Activated T-helper 1 cell treated with anti-CD3 and anti-CD28 coated beads, Interleukin-12 subunit alpha, Interleukin-12 subunit beta, Interleukin-2, Interleukin-4 antibody, amounts not matched to agents 30 ng/mL and 10 ng/mL and 1 ng/mL, durations not matched to agents 14 hours and 24 hours and 36 hours (primary cell): ENCODE measurements at regions of chr1 and their contacts with region 1.

Region 1: DNA sequence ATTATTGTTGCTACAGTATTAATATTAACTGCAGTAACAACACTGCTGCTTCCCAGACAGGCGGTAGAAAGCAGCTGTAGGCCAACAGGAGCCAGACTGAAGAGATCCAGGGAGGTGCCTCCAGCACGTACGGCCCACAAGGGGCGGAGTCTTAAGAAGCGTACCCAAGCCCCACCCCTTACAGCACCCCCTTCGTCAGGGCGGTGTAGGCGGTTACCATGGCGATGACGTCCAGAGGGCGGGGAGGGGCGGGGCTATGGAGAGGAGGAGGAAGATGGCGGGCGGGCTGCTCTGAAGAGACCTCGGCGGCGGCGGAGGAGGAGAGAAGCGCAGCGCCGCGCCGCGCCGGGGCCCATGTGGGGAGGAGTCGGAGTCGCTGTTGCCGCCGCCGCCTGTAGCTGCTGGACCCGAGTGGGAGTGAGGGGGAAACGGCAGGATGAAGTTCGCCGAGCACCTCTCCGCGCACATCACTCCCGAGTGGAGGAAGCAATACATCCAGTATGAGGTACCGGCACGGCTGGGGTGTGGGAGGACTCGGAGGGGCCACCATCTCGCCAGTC is at the start of gene XPR1:
- DNase-seq: peak; percentile 91
- H3K4me3 Mint-ChIP-seq: peak within 1 kb of the TSS; percentile 87
- H3K27ac Mint-ChIP-seq: peak within 1 kb of the TSS; percentile 87
- H3K4me1 Mint-ChIP-seq: peaks cover 8% of the 10 kb centered on the region
- H3K27me3 Mint-ChIP-seq: peaks cover 5% of the 10 kb centered on the region
- total RNA-seq, gene XPR1: 21.1 and 21.2 TPM in 2 replicates

Region 2: DNA sequence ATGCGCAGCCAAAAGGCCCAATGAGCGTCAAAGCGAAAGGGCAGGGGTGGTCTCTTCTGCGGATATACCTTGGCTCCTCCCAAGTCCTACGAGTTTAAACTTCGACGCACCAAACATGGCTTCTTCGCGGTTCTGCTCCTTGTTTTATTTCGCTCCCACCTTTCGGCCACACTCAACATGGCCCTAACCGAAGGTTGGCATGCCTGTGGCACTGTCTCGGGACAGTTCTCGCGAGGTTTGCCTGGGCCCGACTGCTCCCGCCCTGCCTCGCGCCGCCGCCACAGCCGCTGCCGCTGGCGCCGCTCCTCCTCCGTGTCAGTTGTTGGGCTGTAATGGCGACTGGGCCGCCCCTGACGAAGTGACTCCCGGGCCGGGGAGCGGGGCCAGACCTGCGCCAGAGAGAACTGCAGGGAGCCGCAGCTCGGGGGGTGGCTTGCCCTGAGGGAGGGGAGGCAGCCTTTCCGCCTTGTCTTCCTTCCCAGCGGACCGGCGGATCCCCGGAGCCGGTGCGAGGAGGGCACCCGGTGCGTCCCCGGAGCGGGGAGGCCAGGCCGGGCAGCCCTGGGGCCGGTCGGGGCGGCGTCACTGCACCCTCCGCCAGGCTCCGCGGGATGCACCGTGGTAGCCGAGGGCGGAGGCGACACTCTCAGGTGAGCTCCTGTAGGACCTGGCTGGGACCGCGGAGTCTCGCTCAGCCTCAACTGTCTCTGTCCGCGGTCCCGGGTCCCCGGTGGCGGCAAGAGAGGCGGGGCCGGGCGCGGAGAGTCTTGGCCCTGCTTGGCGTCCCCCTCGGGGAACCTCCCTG is 677.2 kb before region 1 on chr1 and contains the start of gene CEP350:
- intact Hi-C with region 1: loop called (anchors 1 kb)
- DNase-seq: peak; percentile 96
- H3K4me3 Mint-ChIP-seq: peak within 1 kb of the TSS; percentile 94
- H3K27ac Mint-ChIP-seq: peak within 1 kb of the TSS; percentile 94
- H3K4me1 Mint-ChIP-seq: peaks cover 50% of the 10 kb centered on the region
- H3K27me3 Mint-ChIP-seq: no peaks in the 10 kb centered on the region
- total RNA-seq, gene CEP350: 44.6 and 51.6 TPM in 2 replicates

Region 3: DNA sequence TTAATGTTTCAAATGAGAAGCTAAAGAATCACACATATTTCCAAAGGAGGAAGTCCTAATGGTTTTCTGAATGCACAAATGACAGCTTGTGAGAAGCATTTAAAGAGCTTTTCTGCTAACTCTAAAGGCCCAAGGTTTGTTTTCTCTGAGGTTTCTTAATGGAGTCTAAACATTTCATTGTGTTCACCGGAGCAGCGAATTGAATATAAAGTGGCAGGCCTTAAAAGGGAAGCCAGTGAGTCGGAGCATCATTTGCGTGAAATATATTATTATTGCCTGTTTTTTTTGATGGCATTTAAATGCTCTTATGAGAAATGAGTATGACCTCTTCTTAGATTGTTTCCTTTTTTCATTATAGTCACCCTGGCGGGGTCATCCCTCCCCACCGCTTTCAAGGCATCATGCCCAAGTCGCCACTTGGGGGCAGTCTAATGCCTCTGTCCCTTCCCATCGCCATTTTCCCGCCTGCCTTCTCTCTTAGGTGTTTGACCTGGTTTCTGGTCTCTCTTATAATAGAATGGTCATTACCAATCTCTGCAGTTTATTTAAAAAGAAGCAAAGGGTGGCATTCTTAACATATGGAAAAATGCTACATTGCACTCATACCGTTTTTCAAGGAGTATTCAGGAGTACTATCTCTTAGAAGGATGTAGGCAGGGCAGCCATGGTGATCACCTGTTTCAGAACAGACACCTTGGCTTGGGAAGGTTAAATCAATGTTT is 98.4 kb before region 1 on chr1:
- intact Hi-C with region 1: loop called (anchors 2 kb)
- DNase-seq: peak; percentile 42
- H3K4me3 Mint-ChIP-seq: no peak overlapping the region
- H3K27ac Mint-ChIP-seq: no peak overlapping the region
- H3K4me1 Mint-ChIP-seq: no peaks in the 10 kb centered on the region
- H3K27me3 Mint-ChIP-seq: peaks cover 6% of the 10 kb centered on the region

Region 4: GRCh38 chr1:180863158-180863775 is 231.4 kb after region 1 on chr1:
- intact Hi-C with region 1: loop called (anchors 5 kb)
- DNase-seq: no peak
- H3K4me3 Mint-ChIP-seq: no peak overlapping the region
- H3K27ac Mint-ChIP-seq: no peak overlapping the region
- H3K4me1 Mint-ChIP-seq: no peaks in the 10 kb centered on the region
- H3K27me3 Mint-ChIP-seq: no peaks in the 10 kb centered on the region

Region 5: GRCh38 chr1:181089677-181090409 is 458.0 kb after region 1 on chr1:
- intact Hi-C with region 1: loop called (anchors 2 kb)
- DNase-seq: peak; percentile 78
- H3K4me3 Mint-ChIP-seq: peak overlapping the region; percentile 98
- H3K27ac Mint-ChIP-seq: peak overlapping the region; percentile 95
- H3K4me1 Mint-ChIP-seq: peaks cover 57% of the 10 kb centered on the region
- H3K27me3 Mint-ChIP-seq: peaks cover 5% of the 10 kb centered on the region